Activated CD4-positive, alpha-beta memory T cell treated with anti-CD3 and anti-CD28 coated beads, Interleukin-2, amount 10 ng/mL, durations not matched to agents 7 days and 5 days (primary cell): ENCODE measurements at regions of chr6 and their contacts with region 1.

Region 1: GRCh38 chr6:110815217-110816109 is at the start of gene CDK19:
- DNase-seq: peak; percentile 99
- H3K4me3 Mint-ChIP-seq: peak within 1 kb of the TSS; percentile 100
- H3K27ac Mint-ChIP-seq: peak within 1 kb of the TSS; percentile 99
- H3K4me1 Mint-ChIP-seq: peaks cover 56% of the 10 kb centered on the region
- H3K27me3 Mint-ChIP-seq: no peaks in the 10 kb centered on the region
- total RNA-seq, gene CDK19: 30.8 to 33.2 TPM

Region 2: DNA sequence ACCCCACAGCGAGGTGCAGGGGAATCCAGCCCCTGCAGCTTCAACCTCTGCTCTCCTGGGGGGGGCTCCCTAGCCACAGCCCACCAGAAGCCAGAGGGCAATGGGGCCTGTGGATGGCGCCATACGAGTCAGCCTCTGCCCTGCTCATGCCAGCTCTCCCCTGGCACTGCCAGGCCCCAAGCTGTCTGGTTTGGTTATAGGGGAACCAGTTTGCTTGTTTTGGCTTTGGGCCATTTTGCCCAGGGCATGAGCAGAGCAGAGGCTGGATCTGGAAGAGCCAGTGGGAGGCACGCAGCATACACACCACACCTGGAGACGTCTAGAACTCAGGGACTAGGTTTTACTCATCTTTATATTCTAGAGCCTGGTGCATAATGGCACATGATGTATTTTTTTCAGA is 272.4 kb before region 1 on chr6:
- CTCF ChIA-PET with region 1: no interaction called
- POLR2A ChIA-PET with region 1: interaction called, 19 read pairs
- DNase-seq: no peak
- H3K4me3 Mint-ChIP-seq: no peak overlapping the region
- H3K27ac Mint-ChIP-seq: no peak overlapping the region
- H3K4me1 Mint-ChIP-seq: peaks cover 27% of the 10 kb centered on the region
- H3K27me3 Mint-ChIP-seq: peaks cover 2% of the 10 kb centered on the region

Region 3: GRCh38 chr6:110682460-110682853 is 133.0 kb before region 1 on chr6:
- CTCF ChIA-PET with region 1: interaction called, 8 read pairs
- POLR2A ChIA-PET with region 1: interaction called, 15 read pairs
- DNase-seq: peak; percentile 65
- H3K4me3 Mint-ChIP-seq: no peak overlapping the region
- H3K27ac Mint-ChIP-seq: peak overlapping the region; percentile 42
- H3K4me1 Mint-ChIP-seq: peaks cover 19% of the 10 kb centered on the region
- H3K27me3 Mint-ChIP-seq: no peaks in the 10 kb centered on the region

Region 4: GRCh38 chr6:110826236-110827129 is 11.0 kb after region 1 on chr6:
- CTCF ChIA-PET with region 1: interaction called, 3 read pairs
- POLR2A ChIA-PET with region 1: interaction called, 15 read pairs
- DNase-seq: no peak
- H3K4me3 Mint-ChIP-seq: no peak overlapping the region
- H3K27ac Mint-ChIP-seq: no peak overlapping the region
- H3K4me1 Mint-ChIP-seq: peaks cover 6% of the 10 kb centered on the region
- H3K27me3 Mint-ChIP-seq: peaks cover 3% of the 10 kb centered on the region

Region 5: GRCh38 chr6:110873981-110874879 is 58.8 kb after region 1 on chr6 and contains the start of gene AMD1:
- CTCF ChIA-PET with region 1: interaction called, 56 read pairs
- POLR2A ChIA-PET with region 1: interaction called, 813 read pairs
- DNase-seq: peak; percentile 94
- H3K4me3 Mint-ChIP-seq: peak within 1 kb of the TSS; percentile 90
- H3K27ac Mint-ChIP-seq: peak within 1 kb of the TSS; percentile 95
- H3K4me1 Mint-ChIP-seq: peaks cover 27% of the 10 kb centered on the region
- H3K27me3 Mint-ChIP-seq: no peaks in the 10 kb centered on the region
- total RNA-seq, gene AMD1: 71.0 to 73.2 TPM

Region 6: GRCh38 chr6:110890288-110890687 is 74.8 kb after region 1 on chr6:
- CTCF ChIA-PET with region 1: no interaction called
- POLR2A ChIA-PET with region 1: interaction called, 11 read pairs
- DNase-seq: no peak
- H3K4me3 Mint-ChIP-seq: no peak overlapping the region
- H3K27ac Mint-ChIP-seq: no peak overlapping the region
- H3K4me1 Mint-ChIP-seq: peaks cover 23% of the 10 kb centered on the region
- H3K27me3 Mint-ChIP-seq: no peaks in the 10 kb centered on the region

Region 7: DNA sequence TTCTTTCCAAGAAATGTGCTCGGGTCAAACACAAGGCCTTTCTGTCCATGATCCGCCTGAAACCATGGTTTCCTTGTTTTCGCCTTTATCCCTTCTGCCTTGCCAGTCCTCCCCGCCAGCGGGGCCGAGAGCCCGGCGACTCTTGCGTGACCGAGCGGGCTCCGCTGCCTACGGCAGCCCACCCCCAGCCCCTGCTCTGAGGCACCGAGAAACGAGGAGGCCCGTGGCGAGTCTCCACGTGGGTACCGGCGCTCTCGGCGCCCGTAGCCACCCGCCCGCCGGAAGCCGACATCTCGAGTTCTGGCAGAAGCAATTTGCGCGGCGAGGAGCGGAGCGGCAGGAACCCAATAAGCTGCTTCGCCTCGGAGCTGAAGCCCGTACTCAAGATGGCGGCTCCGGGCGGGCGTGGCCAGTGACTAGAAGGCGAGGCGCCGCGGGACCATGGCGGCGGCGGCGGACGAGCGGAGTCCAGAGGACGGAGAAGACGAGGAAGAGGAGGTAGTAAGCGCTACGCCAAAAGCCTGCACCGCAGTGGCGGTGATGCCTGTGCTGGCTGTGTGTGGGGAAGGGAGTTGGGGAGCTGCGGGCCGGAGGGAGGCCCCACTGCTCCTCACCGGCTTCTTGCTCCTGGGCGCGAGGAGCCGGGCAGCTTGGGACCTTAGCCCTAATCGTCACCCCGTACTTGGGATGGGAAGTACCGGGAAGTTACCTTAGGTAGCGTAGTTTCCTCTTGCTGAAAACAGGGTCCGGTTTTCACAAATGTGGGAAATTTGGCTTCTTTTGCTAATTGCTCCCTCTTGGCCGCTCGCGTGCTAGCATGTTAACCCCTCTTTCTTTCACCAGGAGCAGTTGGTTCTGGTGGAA is 143.1 kb after region 1 on chr6 and contains the start of gene GTF3C6:
- CTCF ChIA-PET with region 1: interaction called, 8 read pairs
- POLR2A ChIA-PET with region 1: interaction called, 75 read pairs
- DNase-seq: peak; percentile 95
- H3K4me3 Mint-ChIP-seq: peak within 1 kb of the TSS; percentile 95
- H3K27ac Mint-ChIP-seq: peak within 1 kb of the TSS; percentile 95
- H3K4me1 Mint-ChIP-seq: peaks cover 19% of the 10 kb centered on the region
- H3K27me3 Mint-ChIP-seq: no peaks in the 10 kb centered on the region
- total RNA-seq, gene GTF3C6: 83.2 to 93.3 TPM